Activated naive CD4-positive, alpha-beta T cell treated with anti-CD3 and anti-CD28 coated beads for 36 hours (primary cell): ENCODE measurements at regions of chr5 and their contacts with region 1.

Region 1: GRCh38 chr5:74934949-74935751 is 69.0 kb upstream of the FAM169A start:
- DNase-seq: peak; percentile 60
- H3K4me3 Mint-ChIP-seq: peak overlapping the region; percentile 61
- H3K27ac Mint-ChIP-seq: peak overlapping the region; percentile 80
- H3K4me1 Mint-ChIP-seq: peaks cover 31% of the 10 kb centered on the region
- H3K27me3 Mint-ChIP-seq: no peaks in the 10 kb centered on the region

Region 2: GRCh38 chr5:74684900-74685851 is 250.0 kb before region 1 on chr5 and contains the start of gene HEXB:
- CTCF ChIA-PET with region 1: interaction called, 4 read pairs
- intact Hi-C with region 1: loop called (anchors 1 kb)
- DNase-seq: peak; percentile 92
- H3K4me3 Mint-ChIP-seq: peak within 1 kb of the TSS; percentile 71
- H3K27ac Mint-ChIP-seq: peak within 1 kb of the TSS; percentile 6
- H3K4me1 Mint-ChIP-seq: peaks cover 23% of the 10 kb centered on the region
- H3K27me3 Mint-ChIP-seq: no peaks in the 10 kb centered on the region
- total RNA-seq, gene HEXB: 65.6 to 70.0 TPM

Region 3: DNA sequence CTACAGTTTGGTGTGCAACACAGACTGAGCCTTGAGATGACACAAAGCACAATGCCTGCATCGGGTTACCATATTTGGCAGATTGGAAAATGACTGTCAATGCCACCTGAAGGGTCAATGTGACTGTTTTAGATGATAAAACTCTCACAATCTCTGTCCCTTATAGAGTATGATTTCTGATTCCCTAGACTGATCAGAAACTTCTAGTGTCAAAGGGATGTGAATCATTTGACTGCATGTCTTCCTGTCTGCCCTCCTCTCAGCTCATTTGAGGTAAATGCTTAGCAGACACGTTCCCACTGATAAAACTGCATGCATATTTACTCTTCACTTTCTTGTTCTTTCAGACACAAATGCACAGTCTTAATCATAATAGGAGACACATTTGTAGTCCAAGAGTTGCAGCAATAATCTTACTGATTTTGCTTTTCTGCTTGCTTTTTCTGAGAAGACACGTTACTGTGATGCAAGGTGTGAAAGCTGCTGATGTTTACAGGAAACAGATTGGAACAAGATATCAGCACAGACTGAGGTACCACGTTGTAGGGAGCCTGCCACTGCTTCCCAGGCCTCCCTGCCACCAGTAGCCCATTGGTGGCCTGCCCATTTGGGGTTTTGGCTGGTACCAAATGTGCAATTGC is 39.4 kb after region 1 on chr5:
- CTCF ChIA-PET with region 1: interaction called, 7 read pairs
- intact Hi-C with region 1: loop called (anchors 1 kb)
- DNase-seq: peak; percentile 55
- H3K4me3 Mint-ChIP-seq: no peak overlapping the region
- H3K27ac Mint-ChIP-seq: peak overlapping the region; percentile 83
- H3K4me1 Mint-ChIP-seq: peaks cover 25% of the 10 kb centered on the region
- H3K27me3 Mint-ChIP-seq: no peaks in the 10 kb centered on the region

Region 4: DNA sequence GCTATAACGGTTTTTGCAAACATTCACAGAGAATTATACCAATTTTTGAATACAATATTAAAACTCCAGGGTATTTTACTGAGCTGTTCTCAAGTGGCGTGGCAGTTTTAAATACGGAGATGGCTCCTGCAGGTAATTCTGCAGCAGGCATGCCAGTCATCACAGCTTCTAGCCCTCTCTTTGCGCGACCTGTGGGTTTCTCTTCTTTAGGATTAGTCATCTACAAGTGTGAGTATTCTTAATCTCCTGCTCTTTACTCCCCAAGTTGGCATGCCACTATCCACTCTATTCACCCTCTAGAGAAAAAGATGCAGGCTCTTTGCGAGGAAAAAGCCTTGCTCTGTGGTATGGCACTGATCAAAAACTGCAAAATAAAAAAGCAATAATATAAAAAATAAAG is 257.7 kb after region 1 on chr5:
- CTCF ChIA-PET with region 1: no interaction called
- intact Hi-C with region 1: loop called (anchors 5 kb)
- DNase-seq: peak; percentile 58
- H3K4me3 Mint-ChIP-seq: no peak overlapping the region
- H3K27ac Mint-ChIP-seq: no peak overlapping the region
- H3K4me1 Mint-ChIP-seq: peaks cover 26% of the 10 kb centered on the region
- H3K27me3 Mint-ChIP-seq: no peaks in the 10 kb centered on the region

Region 5: DNA sequence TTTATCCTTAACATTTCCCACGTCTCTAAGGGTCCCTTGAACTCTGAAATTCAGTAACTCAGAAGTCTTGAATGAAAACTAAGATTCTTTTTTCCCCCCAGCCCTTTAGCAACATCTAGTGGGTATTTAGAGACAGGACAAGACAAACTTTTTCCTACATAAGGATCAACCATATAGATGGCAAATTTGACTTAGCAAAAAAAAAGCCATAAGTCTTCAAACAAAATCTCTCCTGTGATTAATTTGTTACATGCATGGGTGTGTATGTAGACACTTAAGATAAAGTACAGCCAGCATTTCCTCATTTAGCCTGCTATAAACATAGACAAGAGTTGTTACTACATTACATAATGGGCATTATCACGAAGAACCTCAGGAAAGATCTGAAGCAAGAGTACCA is 330.6 kb after region 1 on chr5:
- CTCF ChIA-PET with region 1: no interaction called
- intact Hi-C with region 1: loop called (anchors 1 kb)
- DNase-seq: no peak
- H3K4me3 Mint-ChIP-seq: no peak overlapping the region
- H3K27ac Mint-ChIP-seq: no peak overlapping the region
- H3K4me1 Mint-ChIP-seq: no peaks in the 10 kb centered on the region
- H3K27me3 Mint-ChIP-seq: no peaks in the 10 kb centered on the region

Region 6: DNA sequence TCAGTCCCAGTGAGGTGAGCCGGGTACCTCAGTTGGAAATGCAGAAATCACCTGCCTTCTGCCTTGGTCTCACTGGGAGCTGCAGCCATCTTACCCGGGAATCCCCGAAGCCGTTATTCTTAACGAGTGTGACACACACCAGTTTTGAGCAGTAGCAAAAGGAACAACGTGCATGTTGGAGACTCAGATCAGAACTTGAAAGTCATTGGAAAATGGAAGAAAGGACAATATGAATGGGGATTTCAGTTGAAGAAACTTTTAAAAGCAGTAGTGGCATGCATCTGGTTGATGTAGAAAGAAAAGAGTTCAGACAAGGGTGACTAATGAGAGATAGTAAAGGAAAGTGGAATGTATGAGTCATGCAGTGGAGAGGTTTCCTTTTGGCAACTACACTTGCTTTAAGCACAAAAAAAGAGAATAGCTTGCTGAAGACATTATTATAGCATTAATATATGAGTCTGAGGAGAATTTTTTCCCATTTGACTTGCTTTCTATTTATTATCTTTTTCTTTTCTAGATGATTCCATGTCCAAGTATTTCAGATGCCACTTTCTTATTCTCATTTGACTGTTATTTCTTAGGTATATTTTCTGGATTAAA is 631.7 kb after region 1 on chr5:
- CTCF ChIA-PET with region 1: no interaction called
- intact Hi-C with region 1: loop called (anchors 5 kb)
- DNase-seq: peak; percentile 84
- H3K4me3 Mint-ChIP-seq: peak overlapping the region; percentile 48
- H3K27ac Mint-ChIP-seq: peak overlapping the region; percentile 95
- H3K4me1 Mint-ChIP-seq: peaks cover 55% of the 10 kb centered on the region
- H3K27me3 Mint-ChIP-seq: no peaks in the 10 kb centered on the region